Left colon (tissue), 2 donors: ENCODE measurements at regions of chr14 and their contacts with region 1.

Region 1: GRCh38 chr14:31194095-31194494 is 13.5 kb downstream of the HECTD1 start:
- DNase-seq: no peak
- ATAC-seq: no peak

Region 2: GRCh38 chr14:31219169-31219568 is 25.1 kb after region 1 on chr14:
- intact Hi-C with region 1: no loop called
- DNase-seq: no peak
- ATAC-seq: no peak

Region 3: DNA sequence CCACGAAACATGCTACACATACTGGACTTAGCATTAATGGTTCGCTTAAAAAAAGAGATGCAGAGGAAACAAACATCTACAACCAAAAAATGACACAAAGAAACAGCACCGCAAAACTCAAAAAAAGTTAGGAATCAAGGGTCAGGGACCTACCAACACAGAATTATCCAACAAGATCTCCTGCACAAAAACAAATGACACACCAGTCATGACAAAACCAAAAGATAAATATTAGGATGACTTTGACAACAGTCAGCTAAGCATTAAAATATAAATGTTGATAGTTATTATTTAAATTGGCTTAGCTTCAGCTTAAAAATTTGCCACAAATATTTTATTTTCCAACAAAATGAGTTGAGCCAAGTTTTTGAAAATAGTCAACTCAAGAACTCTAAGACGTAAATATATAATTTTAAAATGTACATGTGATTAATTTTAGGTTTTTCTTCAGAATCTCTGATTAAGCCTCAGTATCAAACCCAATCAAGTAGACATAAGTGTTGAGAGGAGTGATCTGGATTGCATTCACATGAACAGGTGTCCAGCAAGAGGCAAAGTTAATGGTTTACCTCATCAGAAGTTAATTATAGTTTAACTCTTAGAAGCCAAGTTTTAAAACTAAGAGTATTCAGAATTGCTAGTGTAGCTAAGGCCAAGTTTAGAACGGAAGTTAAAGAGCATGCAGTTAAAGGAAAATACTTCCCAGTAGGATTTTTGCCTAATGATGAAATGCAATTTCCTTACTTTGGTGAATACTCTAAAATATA is 146.4 kb after region 1 on chr14:
- intact Hi-C with region 1: loop called in 1 of 2 experiments (anchors 10 kb)
- DNase-seq: no peak
- ATAC-seq: peak; percentile 67

Region 4: GRCh38 chr14:32109676-32110547 is 915.8 kb after region 1 on chr14:
- intact Hi-C with region 1: no loop called
- DNase-seq: no peak
- ATAC-seq: no peak